GM10248 (cell line): ENCODE measurements at regions of chr1 and their contacts with region 1.

Region 1: DNA sequence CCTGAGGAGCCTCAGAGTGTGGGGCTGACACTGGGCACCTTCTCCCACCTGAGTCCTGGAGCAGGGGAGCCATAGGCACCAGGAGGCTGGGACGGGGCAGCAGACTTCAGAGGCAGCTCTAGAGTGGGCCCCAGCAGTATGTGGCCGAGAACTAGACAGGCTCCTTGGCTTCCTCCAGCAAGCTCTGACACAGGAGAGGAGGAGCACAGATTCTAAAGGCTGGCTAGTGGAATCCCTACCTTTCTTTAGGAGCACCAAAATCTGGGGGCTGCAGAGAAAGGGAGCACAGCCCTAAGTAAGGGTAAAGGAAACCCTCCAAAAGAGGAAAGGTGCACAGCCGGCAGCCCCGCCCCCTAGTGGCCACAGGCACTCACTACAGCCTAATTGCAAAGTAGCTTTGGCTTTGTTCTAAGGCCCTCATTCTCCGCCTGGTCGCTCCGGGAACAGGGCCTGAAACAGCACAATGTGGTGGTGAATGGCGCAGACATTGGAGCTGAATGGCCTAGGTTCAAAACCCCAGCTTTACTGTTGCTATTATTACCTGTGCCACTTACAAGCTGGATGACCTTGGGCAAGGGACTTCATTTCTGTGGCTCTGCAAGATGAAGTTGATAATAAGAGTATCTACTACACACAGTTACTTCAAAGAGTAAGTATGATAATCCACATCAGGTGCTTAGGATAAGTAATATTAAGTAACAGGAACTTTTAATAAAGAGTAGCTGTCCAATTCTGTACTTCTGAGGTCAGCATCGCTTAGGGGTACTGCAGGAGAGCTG is 8.8 kb upstream of the GUCA2A start:
- DNase-seq: peak; percentile 82
- CTCF ChIP-seq: peak; percentile 95

Region 2: DNA sequence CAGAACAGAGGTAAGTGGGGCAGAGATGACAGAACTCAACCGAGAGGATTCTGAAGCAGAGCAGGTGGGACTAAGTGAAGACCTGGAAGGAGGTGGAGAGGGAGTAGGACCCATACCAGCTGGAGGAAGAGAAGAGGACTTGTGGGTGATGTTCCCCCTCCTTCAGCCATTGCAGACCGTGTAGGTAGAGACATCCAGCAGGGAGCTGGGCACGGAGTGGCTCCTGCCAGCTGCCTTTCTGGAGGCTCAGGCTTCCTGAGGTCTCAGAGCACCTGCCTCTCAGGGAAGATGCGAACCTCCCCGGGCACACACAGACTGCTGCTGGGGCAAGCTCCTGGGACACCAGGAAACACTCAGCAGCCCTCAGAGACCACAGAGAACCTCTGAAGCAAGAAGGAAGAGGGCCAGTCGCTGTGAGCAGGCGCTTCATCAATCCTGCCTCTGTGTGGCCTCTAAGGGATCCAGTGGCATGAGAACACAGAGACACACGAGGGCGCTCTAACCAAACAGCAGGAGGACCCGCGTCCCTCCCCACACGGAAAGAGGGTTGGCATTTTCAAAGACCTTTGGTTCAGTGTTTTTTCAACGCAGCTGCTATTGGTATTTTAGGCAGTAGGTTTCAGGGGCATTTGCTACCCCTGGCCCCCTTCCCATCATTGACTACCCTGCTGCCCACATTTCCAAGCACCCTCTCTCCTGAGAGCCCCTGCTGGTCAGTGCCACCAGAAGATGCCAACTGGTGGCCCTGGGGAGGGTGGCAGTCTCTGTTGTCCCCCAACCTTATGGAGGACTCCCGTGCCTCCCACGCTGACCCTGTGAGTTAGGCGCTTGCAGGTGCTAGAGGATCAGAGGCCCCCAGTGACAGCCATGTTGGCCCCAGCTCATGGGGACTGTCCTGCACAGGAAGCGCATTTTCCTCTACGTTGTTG is 599.3 kb before region 1 on chr1:
- CTCF ChIA-PET with region 1: interaction called, 44 read pairs
- POLR2A ChIA-PET with region 1: no interaction called
- DNase-seq: peak; percentile 88
- CTCF ChIP-seq: peak; percentile 88

Region 3: DNA sequence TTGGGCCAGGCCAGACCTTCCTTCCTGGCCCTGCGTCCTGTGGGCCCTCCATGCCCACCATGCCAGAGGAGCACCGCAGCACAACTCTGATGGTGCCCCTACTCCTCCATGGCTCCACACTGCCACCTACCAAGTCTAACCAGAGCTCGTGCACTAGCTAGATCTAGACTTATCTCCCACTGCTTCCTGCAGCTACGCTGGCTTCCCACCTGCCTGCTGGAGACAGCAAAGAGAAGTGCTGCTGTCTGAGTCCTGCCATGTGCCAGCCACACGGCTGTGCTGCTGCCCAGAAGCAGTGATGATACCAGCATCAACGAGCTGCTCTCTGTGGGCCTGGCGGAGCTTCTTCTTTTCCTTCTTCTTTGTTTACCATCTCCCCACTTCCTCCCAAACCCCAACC is 15.7 kb before region 1 on chr1:
- CTCF ChIA-PET with region 1: interaction called, 60 read pairs
- POLR2A ChIA-PET with region 1: no interaction called
- DNase-seq: no peak
- CTCF ChIP-seq: no peak

Region 4: DNA sequence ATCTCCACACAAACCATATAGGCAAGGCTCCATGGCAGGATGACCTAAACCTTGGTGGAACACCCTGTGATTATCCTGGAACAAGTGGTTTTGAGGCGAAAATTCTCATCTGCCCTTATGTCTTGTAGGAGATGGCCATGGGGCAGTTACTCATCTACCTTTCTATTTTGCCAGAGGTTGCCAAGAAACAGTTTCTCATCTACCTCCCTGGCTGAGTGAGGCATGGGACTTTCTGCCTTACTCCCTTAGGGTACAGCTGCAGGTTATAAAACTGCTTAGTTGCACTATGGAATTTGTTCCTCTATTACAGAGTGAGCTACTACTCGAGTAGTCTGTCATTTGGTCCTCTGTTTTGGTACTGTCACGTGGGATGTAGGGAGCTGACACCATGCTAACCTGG is 22.5 kb after region 1 on chr1:
- CTCF ChIA-PET with region 1: interaction called, 17 read pairs
- POLR2A ChIA-PET with region 1: no interaction called
- DNase-seq: no peak
- CTCF ChIP-seq: no peak